BJ (cell line): ENCODE measurements at regions of chr5 and their contacts with region 1.

Region 1: GRCh38 chr5:1003296-1003937 is 5.2 kb upstream of the NKD2 start:
- DNase-seq: no peak
- H3K4me3 ChIP-seq: no peak overlapping the region
- H3K27me3 ChIP-seq: peaks cover 40% of the 10 kb centered on the region
- CTCF ChIP-seq: no peak

Region 2: GRCh38 chr5:1029282-1029939 is 26.0 kb after region 1 on chr5:
- CTCF ChIA-PET with region 1: no interaction called
- POLR2A ChIA-PET with region 1: interaction called, 10 read pairs
- DNase-seq: no peak
- H3K4me3 ChIP-seq: no peak overlapping the region
- H3K27me3 ChIP-seq: peaks cover 10% of the 10 kb centered on the region
- CTCF ChIP-seq: no peak

Region 3: DNA sequence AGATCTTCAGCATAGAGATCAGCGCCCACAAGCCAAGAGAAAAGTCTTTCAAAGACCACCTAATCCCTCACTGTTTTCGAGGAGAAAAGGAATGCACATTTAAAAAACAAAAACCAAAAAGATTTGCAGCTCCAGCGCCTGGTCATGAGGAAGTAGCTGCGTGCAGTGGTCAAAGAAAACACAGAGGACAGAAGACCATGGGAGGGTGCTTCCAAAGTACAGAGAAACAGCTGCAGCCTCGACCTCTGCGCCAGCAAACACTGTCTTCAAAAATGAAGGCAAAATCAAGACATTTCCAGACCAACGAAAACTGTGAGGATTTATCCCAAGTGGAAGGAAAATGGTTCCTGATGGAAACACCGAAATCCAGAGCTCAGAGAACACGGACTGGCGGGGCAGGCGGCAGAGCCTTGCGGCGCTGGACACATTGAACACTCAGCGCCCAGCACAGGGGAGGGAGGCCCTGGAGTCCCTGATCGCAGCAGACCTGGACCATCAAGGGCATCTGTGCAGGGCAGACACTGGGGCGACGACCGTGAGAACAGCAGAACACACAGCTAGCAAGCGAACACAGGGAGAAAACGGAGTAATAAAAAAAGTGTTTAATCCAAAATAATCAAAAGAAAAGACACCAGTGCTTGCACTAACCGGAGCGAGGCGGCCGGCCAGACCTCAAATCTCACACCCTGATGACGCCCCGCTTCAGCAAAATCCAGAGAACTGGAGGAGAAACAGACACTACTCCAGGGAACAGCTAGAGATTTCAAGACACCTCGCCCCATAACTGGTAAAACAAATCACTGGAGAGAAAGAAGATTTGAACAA is 121.0 kb after region 1 on chr5:
- CTCF ChIA-PET with region 1: no interaction called
- POLR2A ChIA-PET with region 1: interaction called, 20 read pairs
- DNase-seq: no peak
- H3K4me3 ChIP-seq: no peak overlapping the region
- H3K27me3 ChIP-seq: peaks cover 14% of the 10 kb centered on the region
- CTCF ChIP-seq: no peak